IMR-90 (cell line): ENCODE measurements at regions of chr9 and their contacts with region 1.

Region 1: DNA sequence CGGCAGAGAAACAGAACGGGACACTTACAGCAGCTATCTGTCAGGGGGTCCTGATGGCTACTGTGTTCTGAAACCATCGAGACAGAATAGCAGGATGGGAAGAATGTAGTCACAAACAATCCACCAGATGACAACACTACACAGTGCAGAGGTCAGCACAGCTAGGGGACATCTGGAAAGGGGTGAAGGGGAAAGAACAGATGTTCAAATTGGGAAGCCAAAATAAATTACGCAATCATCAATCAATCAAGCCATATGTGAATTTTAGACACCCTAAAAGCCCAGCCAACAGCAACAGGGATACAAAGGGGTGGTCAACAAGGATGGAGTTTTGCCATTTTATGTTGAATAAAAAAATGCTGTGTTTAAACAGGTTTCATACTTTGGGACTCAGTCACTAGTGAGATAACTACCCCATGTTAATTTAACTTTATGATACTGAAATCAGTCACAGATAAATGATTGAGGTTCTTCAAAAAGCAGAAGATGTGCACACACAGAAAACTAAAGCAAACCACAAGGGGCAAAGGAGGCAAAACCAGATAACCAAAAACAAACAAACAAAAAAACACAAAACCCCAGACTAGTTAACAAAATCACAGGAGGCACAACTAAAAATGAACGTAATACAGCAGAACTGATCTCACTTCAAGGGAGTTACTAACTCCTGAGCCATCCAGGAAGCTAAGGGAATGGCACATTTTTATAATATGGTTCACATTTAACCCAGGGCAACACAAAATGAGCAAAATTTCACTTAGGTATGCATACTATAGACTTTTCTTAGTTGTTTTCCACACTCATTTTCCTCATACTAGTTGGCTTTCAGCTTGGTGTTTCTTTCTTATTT is 65.9 kb downstream of the HABP4 start:
- DNase-seq: peak; percentile 22
- ATAC-seq: peak; percentile 34; the same call in 1 of the 2 replicates
- H3K4me3 ChIP-seq: no peak overlapping the region
- H3K27ac ChIP-seq: peak overlapping the region; percentile 43; the same call in 1 of the 2 replicates
- H3K4me1 ChIP-seq: peaks cover 15% of the 10 kb centered on the region
- H3K27me3 ChIP-seq: no peaks in the 10 kb centered on the region
- CTCF ChIP-seq: no peak
- POLR2A ChIP-seq: no peak
- RAD21 ChIP-seq: no peak

Region 2: GRCh38 chr9:96441798-96442445 is 73.9 kb before region 1 on chr9:
- CTCF ChIA-PET with region 1: no interaction called
- POLR2A ChIA-PET with region 1: no interaction called
- dilution Hi-C with region 1: no loop called
- in situ Hi-C with region 1: no loop called
- intact Hi-C with region 1: no loop called
- DNase-seq: peak; percentile 23
- ATAC-seq: no peak
- H3K4me3 ChIP-seq: no peak overlapping the region
- H3K27ac ChIP-seq: no peak overlapping the region
- H3K4me1 ChIP-seq: no peaks in the 10 kb centered on the region
- H3K27me3 ChIP-seq: no peaks in the 10 kb centered on the region
- CTCF ChIP-seq: peak; percentile 44
- POLR2A ChIP-seq: no peak
- RAD21 ChIP-seq: peak; percentile 43

Region 3: DNA sequence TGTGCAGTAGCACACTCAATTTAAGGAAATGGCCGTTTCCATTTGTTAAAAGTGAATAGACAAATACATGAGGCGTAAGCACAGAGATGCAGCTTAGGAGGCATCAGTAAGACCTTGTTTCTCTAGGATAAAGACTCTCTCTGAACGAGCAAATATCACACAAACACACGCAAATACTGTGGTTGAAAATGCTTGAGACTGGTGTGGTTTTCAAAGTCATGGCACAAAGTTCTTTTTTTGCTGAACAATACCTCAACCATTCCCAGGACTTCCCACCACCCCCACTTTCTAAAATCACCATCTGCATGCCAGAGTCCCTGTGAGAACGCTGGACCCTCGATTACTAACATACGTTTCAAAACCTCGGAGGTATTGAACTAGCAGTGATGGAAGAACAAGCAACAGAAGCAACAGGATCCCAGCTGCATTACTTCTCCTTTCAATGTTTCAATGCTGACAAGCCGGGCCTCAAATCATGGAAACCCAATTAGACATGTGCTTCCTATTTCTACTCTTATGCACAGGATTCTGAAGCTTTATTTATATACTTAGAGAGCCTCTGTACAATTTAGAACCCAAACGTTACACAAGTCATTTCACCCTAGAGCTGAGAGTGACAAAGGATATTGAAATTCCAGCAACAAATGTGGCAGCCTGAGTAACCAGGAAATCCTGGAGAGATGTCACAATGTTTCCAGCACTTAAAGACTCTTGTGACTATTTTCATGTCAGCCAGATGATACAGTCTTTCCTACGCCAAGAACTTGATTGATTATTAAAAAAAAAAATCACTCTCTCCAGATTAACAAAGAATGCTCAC is 39.9 kb after region 1 on chr9:
- CTCF ChIA-PET with region 1: no interaction called
- POLR2A ChIA-PET with region 1: no interaction called
- dilution Hi-C with region 1: no loop called
- in situ Hi-C with region 1: no loop called
- intact Hi-C with region 1: loop called (anchors 5 kb)
- DNase-seq: peak; percentile 44
- ATAC-seq: no peak
- H3K4me3 ChIP-seq: no peak overlapping the region
- H3K27ac ChIP-seq: peak overlapping the region; percentile 47; the same call in 1 of the 2 replicates
- H3K4me1 ChIP-seq: peaks cover 18% of the 10 kb centered on the region
- H3K27me3 ChIP-seq: no peaks in the 10 kb centered on the region
- CTCF ChIP-seq: no peak
- POLR2A ChIP-seq: no peak
- RAD21 ChIP-seq: no peak